Activated CD4-positive, alpha-beta T cell treated with anti-CD3 and anti-CD28 coated beads, Interleukin-2, amount 10 ng/mL, durations not matched to agents 24 days and 14 days (primary cell): ENCODE measurements at regions of chr1 and their contacts with region 1.

Region 1: DNA sequence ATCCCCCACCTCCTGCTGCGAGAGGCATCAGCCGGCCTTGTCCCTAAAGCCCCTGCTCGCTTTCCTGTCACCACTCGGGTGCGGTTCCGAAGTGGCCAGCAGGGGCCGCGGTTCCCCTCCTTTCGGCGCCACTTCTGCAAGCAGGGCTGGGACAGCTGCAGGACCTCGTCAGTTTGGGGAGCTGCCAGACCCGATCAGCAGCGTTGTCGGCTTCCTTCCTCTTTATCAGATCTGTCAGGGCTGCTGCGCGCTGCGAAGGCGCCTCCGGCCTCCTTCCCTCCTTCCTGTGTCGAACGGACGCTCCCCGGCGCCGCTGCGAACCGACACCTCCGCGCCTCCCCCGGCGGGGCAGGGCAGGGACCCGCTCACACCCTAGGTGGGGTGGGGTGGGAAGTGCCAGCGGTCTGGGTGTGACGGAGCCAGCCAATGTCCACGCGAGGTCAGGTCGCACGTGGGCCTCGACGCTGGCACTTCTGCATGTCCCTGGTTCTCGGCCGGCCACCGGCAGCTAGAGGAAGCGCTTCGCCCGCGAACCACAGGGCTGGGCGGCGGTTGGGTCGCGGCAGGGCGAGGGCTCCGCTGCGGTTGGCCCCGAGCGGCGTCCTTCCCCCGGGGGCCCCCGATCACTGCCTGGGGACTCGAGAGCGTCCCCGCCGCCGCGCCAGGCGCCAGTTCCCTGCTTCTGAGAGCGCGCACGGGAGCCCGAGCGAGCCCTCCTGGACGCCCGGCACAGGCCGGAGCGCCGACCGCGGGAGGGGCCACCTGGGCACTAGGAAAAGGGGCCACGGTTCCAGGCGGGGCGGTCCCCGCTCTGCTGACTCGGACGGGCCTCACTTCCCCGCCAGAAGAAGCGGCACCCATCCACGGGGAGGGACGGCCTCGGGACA is 81.8 kb downstream of the RUNX3 start:
- DNase-seq: peak; percentile 97
- H3K4me3 Mint-ChIP-seq: peak overlapping the region; percentile 82
- H3K27ac Mint-ChIP-seq: no peak overlapping the region
- H3K4me1 Mint-ChIP-seq: peaks cover 15% of the 10 kb centered on the region
- H3K27me3 Mint-ChIP-seq: peaks cover 33% of the 10 kb centered on the region

Region 2: GRCh38 chr1:24897767-24898483 is 49.7 kb after region 1 on chr1:
- intact Hi-C with region 1: loop called (anchors 1 kb)
- DNase-seq: peak; percentile 83
- H3K4me3 Mint-ChIP-seq: no peak overlapping the region
- H3K27ac Mint-ChIP-seq: peak overlapping the region; percentile 56
- H3K4me1 Mint-ChIP-seq: peaks cover 12% of the 10 kb centered on the region
- H3K27me3 Mint-ChIP-seq: no peaks in the 10 kb centered on the region

Region 3: GRCh38 chr1:24923485-24924113 is 75.4 kb after region 1 on chr1:
- intact Hi-C with region 1: loop called (anchors 2 kb)
- DNase-seq: no peak
- H3K4me3 Mint-ChIP-seq: peak overlapping the region; percentile 23
- H3K27ac Mint-ChIP-seq: peak overlapping the region; percentile 78
- H3K4me1 Mint-ChIP-seq: peaks cover 67% of the 10 kb centered on the region
- H3K27me3 Mint-ChIP-seq: peaks cover 2% of the 10 kb centered on the region

Region 4: GRCh38 chr1:25037174-25038074 is 189.2 kb after region 1 on chr1:
- intact Hi-C with region 1: loop called (anchors 1 kb)
- DNase-seq: peak; percentile 90
- H3K4me3 Mint-ChIP-seq: peak overlapping the region; percentile 47
- H3K27ac Mint-ChIP-seq: peak overlapping the region; percentile 64
- H3K4me1 Mint-ChIP-seq: peaks cover 42% of the 10 kb centered on the region
- H3K27me3 Mint-ChIP-seq: peaks cover 9% of the 10 kb centered on the region

Region 5: DNA sequence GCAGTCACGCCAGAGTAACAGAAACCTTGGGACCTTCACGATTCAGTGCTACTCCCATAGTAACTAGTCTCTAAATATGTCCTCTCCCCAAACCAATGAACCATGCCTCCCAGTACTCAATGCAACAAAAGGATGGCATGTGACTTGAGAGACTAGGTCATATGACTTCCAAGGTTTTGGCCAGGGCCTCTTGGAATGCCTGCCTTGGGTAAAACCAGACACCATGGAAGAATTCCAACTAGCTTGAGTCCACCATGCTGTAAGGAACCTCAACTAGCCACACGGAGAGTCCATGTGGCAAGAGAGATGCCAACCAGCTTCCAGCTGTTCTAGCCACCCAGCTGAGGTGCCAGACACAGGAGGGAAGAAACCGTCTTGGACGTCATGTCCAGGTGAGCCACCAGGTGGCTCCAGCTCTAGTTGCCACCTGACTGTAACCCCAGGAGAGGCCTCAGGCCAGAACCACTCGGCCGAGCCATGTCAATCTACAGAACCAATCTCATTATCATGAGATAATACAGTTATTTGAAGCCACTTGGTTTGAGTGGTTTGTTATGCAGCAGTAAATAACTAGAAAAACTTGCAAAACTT is 269.1 kb after region 1 on chr1:
- intact Hi-C with region 1: no loop called
- DNase-seq: peak; percentile 72
- H3K4me3 Mint-ChIP-seq: no peak overlapping the region
- H3K27ac Mint-ChIP-seq: no peak overlapping the region
- H3K4me1 Mint-ChIP-seq: peaks cover 21% of the 10 kb centered on the region
- H3K27me3 Mint-ChIP-seq: peaks cover 18% of the 10 kb centered on the region

Region 6: GRCh38 chr1:25148673-25149300 is 300.5 kb after region 1 on chr1:
- intact Hi-C with region 1: loop called (anchors 2 kb)
- DNase-seq: peak; percentile 83
- H3K4me3 Mint-ChIP-seq: no peak overlapping the region
- H3K27ac Mint-ChIP-seq: no peak overlapping the region
- H3K4me1 Mint-ChIP-seq: peaks cover 2% of the 10 kb centered on the region
- H3K27me3 Mint-ChIP-seq: peaks cover 44% of the 10 kb centered on the region

Region 7: DNA sequence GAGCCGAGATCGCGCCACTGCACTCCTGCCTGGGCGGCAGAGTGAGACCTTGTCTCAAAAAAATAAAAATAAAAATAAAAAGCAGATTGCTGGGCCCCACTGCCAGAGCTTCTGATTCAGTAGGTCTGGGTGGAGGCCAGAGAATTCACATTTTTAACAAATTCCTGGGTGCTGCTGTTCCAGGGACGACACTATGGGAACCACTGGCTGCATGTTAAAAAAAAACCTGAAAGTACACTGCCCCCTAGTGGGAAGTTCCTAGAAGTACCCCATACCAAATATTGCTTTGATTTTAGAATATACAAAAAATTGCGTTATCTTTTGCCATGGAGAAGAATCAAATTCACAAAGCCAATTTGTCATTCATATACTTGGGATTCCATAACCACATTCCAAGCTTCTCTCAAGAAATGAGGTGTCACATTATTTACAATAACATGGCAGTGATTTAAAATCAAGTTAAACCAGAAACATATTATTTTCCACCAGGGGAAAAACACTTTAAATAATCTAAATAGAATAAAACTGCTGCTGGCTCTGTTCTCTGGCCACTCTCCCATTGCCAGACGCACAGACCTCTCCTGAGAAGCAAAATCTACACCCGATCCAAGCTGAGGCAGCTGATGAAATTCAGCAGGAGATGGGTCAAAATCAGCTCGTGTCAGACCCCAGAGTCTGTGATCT is 356.7 kb after region 1 on chr1:
- intact Hi-C with region 1: loop called (anchors 1 kb)
- DNase-seq: peak; percentile 79
- H3K4me3 Mint-ChIP-seq: no peak overlapping the region
- H3K27ac Mint-ChIP-seq: no peak overlapping the region
- H3K4me1 Mint-ChIP-seq: no peaks in the 10 kb centered on the region
- H3K27me3 Mint-ChIP-seq: peaks cover 16% of the 10 kb centered on the region